Activated CD4-positive, alpha-beta memory T cell treated with anti-CD3 and anti-CD28 coated beads, Interleukin-2, amount 10 ng/mL, durations not matched to agents 7 days and 5 days (primary cell): ENCODE measurements at regions of chr5 and their contacts with region 1.

Region 1: DNA sequence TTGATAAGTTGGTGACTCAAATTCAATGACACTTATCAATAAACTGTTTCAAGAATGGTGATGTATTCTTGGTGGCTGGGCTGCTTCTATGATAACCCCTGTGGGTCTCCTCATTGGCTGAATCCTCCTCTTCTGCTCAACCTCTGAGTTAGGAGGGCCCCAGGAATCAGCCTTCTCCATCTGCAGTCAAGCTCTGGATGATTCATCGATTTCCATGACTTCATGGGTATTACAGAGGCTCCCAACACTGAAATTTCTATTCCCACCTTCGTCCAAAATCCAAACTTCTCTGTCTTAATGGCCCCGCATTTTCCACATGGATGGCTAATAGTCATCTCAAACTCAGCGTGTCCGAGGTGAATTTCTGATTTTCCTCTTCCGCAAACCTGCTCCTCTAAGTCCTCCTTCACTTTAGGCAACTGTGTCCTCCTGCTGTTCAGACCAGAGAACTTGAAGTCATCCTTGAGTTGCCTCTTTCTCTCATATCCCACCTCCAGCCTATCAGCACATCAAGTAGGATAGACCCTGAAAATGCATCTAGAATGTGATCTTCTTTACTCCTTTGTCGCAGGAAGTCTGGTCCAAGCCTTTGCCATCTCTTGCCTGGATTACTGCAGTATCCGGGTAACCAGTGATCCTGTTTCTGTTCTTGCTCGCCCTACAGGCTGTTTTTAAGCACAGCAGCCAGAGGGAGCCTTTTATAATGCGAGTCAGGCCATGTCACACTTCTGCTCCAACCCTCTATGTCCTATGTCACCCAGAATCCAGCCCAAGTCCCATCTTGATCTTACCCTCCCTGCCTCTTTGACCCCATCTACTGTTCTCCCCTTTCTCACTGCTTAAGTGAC is 41.4 kb upstream of the IL7R start:
- DNase-seq: peak; percentile 63
- H3K4me3 Mint-ChIP-seq: no peak overlapping the region
- H3K27ac Mint-ChIP-seq: no peak overlapping the region
- H3K4me1 Mint-ChIP-seq: peaks cover 47% of the 10 kb centered on the region
- H3K27me3 Mint-ChIP-seq: no peaks in the 10 kb centered on the region

Region 2: DNA sequence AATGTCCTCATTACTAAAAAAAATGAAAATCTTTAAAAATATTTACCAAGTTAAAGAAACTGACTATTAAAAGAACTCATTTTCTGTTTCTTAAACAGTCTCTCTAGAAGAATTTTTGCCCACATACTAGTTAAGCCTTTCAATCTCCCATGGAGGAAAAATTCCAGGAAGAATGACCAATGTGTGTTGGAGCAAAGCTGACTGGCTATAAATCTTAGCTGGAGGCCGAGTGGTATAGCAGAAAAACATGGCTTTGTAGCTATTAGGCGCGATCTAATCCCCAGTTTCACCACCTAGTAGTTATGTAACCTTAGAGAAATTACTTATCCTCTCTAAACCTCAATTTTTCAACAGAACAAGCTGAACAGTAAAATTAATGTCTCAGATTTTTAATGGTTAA is 449.6 kb before region 1 on chr5:
- CTCF ChIA-PET with region 1: no interaction called
- POLR2A ChIA-PET with region 1: no interaction called
- DNase-seq: no peak
- H3K4me3 Mint-ChIP-seq: no peak overlapping the region
- H3K27ac Mint-ChIP-seq: no peak overlapping the region
- H3K4me1 Mint-ChIP-seq: no peaks in the 10 kb centered on the region
- H3K27me3 Mint-ChIP-seq: peaks cover 10% of the 10 kb centered on the region

Region 3: DNA sequence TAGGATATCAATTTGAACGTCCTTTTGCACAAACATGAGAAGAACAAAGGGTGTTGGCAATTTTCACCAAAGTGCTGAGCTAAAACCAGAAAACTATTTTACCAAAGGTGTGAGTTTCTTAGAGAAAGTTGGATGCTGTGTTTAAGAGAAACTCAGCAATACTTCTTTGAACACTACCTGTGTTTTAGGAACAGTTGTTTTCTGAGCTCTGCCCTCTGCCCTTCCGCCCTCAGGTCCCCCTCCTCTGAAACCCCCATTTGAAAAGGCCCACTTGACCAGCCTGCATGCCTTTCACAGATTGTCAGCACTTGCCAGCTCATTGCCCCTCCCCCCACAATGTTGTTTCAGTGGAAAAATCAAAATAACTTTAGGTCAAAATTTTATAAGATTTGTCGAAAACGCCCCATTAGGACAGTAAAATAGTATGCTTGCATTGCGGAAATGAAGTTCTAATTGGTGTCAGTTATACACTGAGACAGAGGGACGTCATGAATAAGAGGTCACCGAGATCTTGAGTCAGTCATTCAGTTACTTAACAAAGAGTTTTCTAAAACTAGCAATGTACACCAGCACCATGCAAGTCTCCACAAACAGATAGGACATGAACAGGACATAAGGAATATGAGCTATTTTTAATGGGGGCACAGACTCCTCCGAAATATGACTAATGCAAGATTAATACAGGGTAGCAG is 20.5 kb before region 1 on chr5:
- CTCF ChIA-PET with region 1: interaction called, 4 read pairs
- POLR2A ChIA-PET with region 1: interaction called, 44 read pairs
- DNase-seq: no peak
- H3K4me3 Mint-ChIP-seq: no peak overlapping the region
- H3K27ac Mint-ChIP-seq: peak overlapping the region; percentile 91
- H3K4me1 Mint-ChIP-seq: peaks cover 79% of the 10 kb centered on the region
- H3K27me3 Mint-ChIP-seq: no peaks in the 10 kb centered on the region

Region 4: DNA sequence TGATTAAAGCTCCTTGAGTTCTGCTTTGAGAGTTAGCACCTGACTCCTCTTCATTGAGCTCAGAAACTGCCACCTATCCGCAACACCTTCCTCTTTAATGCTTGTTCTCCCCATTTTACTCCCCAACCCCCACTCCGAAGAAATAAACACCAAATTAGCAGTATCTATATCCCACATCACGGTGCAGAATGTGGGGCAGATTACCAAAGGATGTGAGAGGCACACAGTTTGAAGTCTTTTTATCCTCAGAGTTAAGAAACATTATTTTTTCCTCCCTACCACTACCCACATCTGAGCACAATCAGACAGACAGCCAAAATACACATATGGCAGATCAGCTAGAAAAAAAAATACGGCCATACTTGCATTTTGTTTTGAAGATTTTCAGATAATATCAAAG is 15.3 kb after region 1 on chr5:
- CTCF ChIA-PET with region 1: interaction called, 10 read pairs
- POLR2A ChIA-PET with region 1: interaction called, 64 read pairs
- DNase-seq: no peak
- H3K4me3 Mint-ChIP-seq: peak overlapping the region; percentile 1
- H3K27ac Mint-ChIP-seq: peak overlapping the region; percentile 74
- H3K4me1 Mint-ChIP-seq: peaks cover 85% of the 10 kb centered on the region
- H3K27me3 Mint-ChIP-seq: no peaks in the 10 kb centered on the region

Region 5: DNA sequence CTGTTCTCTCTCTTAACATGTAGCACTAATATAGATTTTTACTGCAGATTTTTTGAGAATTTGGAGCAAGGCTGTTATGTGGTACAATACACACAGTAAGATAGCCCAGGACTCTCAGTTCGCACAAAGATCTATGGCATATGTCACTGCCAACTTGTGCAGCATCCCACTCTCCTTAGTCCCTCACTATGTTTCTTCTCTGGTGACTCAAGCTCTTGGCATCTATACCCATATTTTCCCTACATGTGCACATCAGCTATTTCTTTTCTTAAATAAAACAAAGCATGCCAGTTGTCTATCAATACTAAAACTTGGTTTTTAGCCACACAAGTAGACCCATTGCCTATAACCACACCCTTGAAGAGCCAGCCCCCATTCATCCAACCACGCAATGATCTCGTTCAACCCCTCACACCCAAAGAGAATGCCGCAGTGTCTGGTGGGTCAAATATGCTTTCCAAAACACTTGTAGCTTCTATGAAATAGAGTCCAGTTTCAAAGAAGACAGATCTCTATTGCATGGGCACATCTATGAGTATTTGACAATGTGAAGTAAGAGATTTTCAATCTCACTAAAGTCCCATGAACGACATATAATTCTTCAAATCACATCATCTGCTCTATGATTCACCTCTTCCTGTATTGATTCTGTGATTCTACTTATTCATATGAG is 23.2 kb after region 1 on chr5:
- CTCF ChIA-PET with region 1: interaction called, 10 read pairs
- POLR2A ChIA-PET with region 1: interaction called, 64 read pairs
- DNase-seq: no peak
- H3K4me3 Mint-ChIP-seq: no peak overlapping the region
- H3K27ac Mint-ChIP-seq: peak overlapping the region; percentile 19
- H3K4me1 Mint-ChIP-seq: peaks cover 57% of the 10 kb centered on the region
- H3K27me3 Mint-ChIP-seq: no peaks in the 10 kb centered on the region

Region 6: DNA sequence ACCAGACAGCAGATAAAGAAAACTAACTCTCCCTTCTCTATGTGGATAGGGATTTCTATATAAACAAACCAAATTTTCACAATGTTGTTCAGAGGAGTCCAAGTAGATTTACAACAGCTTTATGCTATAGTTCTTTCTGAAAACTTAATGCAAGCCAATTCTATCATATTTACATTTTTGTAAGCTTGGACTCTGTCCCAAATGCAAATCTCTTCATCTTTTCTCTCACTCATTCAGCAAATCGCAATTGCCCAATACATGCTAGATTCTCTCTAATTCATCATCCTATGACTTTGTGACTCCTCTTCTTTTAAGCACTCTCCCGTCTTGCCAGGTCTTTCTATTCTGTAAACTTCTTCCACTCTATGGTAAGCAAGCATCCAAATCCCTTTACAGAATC is 290.5 kb after region 1 on chr5:
- CTCF ChIA-PET with region 1: no interaction called
- POLR2A ChIA-PET with region 1: no interaction called
- DNase-seq: no peak
- H3K4me3 Mint-ChIP-seq: no peak overlapping the region
- H3K27ac Mint-ChIP-seq: no peak overlapping the region
- H3K4me1 Mint-ChIP-seq: no peaks in the 10 kb centered on the region
- H3K27me3 Mint-ChIP-seq: no peaks in the 10 kb centered on the region